ENCODE measurements at regions of chr13 and their contacts with region 1.

Region 1: DNA sequence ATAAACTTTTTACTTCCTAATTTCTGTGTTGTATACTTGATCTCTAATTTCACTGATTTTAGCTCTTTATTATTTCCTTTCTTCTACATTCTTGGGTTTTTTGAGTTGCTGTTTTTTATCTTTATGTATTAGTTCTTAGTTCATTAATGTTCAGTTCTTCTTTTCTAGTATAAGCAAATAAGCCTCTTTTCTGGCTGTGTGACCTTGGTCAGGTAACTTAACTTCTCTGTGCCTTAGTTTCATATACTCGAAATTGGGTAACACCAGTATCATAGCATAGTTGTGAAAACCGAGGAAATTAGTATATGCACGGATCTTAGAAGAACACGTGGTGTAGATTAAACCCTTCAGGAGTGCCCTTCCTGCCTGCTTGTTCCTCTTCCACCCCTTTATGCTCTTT is 130.2 kb upstream of the C1QTNF9B start:
- DNase-seq: no peak
- H3K4me3 ChIP-seq: no peak overlapping the region
- H3K4me3 Mint-ChIP-seq: no peak overlapping the region
- H3K27ac Mint-ChIP-seq: no peak overlapping the region
- H3K4me1 ChIP-seq: peaks cover 5% of the 10 kb centered on the region
- H3K4me1 Mint-ChIP-seq: peaks cover 8% of the 10 kb centered on the region
- H3K27me3 ChIP-seq: no peaks in the 10 kb centered on the region
- H3K27me3 Mint-ChIP-seq: no peaks in the 10 kb centered on the region
- CTCF ChIP-seq: no peak

Region 2: DNA sequence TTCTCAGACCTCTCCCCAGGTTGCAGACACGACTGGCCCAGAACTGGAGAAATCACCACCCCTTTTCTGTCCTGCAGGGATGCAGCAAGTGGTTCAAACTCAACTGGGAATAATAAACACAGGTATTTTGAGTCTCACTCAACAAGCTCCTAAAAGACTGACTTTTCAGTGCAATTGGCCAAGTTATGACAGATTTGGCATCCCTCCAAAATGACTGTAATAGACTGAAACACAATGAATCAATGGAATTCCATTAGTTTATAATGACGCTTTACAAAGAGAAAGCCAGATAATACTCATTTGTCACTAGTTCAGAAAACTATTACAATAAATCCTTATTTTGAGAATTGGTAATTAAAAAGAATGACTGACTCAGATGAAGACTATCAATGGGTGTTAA is 176.4 kb before region 1 on chr13:
- CTCF ChIA-PET with region 1: no interaction called
- POLR2A ChIA-PET with region 1: no interaction called
- intact Hi-C with region 1: no loop called
- DNase-seq: no peak
- H3K4me3 ChIP-seq: no peak overlapping the region
- H3K4me3 Mint-ChIP-seq: no peak overlapping the region
- H3K27ac Mint-ChIP-seq: no peak overlapping the region
- H3K4me1 ChIP-seq: peaks cover 15% of the 10 kb centered on the region
- H3K4me1 Mint-ChIP-seq: peaks cover 18% of the 10 kb centered on the region
- H3K27me3 ChIP-seq: no peaks in the 10 kb centered on the region
- H3K27me3 Mint-ChIP-seq: no peaks in the 10 kb centered on the region
- CTCF ChIP-seq: no peak

Region 3: DNA sequence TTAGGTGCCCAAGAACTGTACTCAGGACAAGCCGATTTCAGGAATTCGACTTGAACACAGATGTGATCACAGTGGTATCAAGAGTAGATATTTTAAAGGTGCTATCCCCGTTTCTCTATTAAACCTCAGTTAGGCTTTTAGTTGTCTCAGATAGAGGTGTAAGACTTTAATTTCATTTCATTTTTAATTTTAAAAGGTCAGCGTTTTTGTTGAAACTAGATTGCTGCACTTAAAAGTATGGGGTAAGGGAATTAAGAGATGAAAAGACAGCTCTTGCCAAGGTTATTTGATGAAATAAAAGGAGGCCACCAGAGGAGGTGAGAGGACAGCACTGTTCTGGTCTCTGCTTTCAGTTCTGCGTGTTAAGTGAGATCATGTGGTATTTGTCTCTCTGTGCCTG is 181.6 kb after region 1 on chr13:
- CTCF ChIA-PET with region 1: interaction called, 11 read pairs
- POLR2A ChIA-PET with region 1: no interaction called
- intact Hi-C with region 1: no loop called
- DNase-seq: no peak
- H3K4me3 ChIP-seq: no peak overlapping the region
- H3K4me3 Mint-ChIP-seq: no peak overlapping the region
- H3K27ac Mint-ChIP-seq: no peak overlapping the region
- H3K4me1 ChIP-seq: no peaks in the 10 kb centered on the region
- H3K4me1 Mint-ChIP-seq: no peaks in the 10 kb centered on the region
- H3K27me3 ChIP-seq: no peaks in the 10 kb centered on the region
- H3K27me3 Mint-ChIP-seq: no peaks in the 10 kb centered on the region
- CTCF ChIP-seq: no peak

Region 4: GRCh38 chr13:24381539-24382265 is 354.2 kb after region 1 on chr13:
- CTCF ChIA-PET with region 1: no interaction called
- POLR2A ChIA-PET with region 1: no interaction called
- intact Hi-C with region 1: no loop called
- DNase-seq: no peak
- H3K4me3 ChIP-seq: no peak overlapping the region
- H3K4me3 Mint-ChIP-seq: no peak overlapping the region
- H3K27ac Mint-ChIP-seq: no peak overlapping the region
- H3K4me1 ChIP-seq: no peaks in the 10 kb centered on the region
- H3K4me1 Mint-ChIP-seq: no peaks in the 10 kb centered on the region
- H3K27me3 ChIP-seq: no peaks in the 10 kb centered on the region
- H3K27me3 Mint-ChIP-seq: peaks cover 11% of the 10 kb centered on the region
- CTCF ChIP-seq: no peak

Measured in Caco-2 (cell line).